ENCODE measurements at regions of chr4 and their contacts with region 1.

Region 1: GRCh38 chr4:119785963-119786362 is 157.4 kb upstream of the PDE5A start:
- DNase-seq: peak; percentile 37
- ATAC-seq: no peak

Region 2: DNA sequence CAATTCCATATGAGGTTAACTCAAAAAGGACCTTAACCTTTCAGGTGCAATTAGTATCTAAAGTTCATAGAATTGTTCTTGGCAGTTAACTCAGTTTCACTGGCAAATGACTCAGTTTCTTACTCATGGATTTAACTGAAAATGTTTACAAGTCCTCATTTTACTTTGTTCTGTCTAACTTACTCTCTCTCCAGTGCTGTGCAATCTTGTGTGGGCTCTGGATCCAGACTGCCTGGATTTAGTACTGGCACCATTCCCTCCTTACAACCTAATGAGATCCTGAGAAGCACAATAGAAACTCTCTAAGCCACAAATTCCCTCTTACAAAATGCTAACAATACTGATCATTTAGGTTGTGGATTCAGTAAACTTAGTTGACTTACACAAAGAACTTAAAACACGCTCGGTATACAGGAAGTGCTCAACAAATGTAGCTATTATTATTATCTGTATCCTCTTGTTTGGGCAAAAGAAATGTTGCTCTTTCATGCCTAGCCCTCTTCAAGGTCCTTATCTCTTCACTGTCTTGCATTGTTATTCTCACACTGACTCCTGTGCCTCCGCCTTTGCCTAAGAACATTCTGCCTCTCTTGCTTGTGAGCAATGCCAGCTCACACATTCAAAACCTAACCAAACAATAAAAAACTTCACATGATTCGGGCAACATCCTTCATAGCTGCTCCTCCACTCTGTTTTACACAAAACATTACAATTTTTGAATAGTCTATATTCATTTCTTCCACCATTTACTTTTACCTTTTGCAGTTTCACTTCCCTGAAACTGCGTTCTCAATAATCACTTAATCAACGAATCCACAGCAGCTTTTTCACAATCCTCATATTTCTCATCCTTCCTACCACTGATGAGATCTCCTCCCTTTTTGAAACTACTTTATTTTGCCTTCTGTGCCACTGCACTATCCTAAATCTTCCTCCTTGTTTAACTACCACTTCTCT is 249.1 kb before region 1 on chr4:
- intact Hi-C with region 1: no loop called
- DNase-seq: no peak
- ATAC-seq: no peak

Region 3: DNA sequence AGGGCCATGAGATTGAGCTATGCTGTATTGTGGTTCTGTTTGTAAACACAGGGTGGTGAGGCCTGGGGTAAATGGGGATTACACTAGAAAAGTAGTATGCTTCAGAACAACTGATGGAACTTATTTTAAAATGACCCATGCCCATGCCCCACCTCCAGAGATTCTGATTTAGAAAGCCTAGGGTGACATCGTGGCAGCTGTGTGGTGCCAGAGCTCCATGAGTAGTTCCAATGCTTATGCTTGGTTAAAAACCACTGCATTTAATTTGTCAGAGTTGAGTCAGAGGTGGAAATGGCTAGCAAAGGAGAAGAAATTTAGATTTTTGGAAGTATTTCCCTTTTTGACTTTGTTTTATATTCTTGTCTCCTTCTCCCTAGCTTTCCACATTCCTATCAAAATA is 94.0 kb before region 1 on chr4:
- intact Hi-C with region 1: loop called (anchors 10 kb)
- DNase-seq: peak; percentile 18
- ATAC-seq: peak; percentile 75

Region 4: DNA sequence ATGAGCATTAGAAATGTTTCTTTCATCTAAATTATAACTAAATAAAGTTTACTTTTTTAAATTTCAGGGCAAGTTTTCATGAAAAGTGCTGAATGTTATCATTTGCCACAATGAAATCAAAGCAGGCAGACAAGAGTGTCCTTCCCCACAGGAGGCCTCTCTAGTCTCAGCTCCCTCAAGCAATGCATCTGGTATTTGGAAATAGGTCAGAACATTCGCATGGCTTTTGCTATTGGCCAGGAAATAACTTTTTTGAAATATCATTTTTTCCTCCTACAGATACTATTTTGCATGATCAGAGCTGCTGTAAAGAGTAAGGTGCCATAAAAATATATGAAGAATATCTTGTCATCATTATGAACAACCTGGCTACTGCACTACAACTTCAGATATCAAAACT is 239.6 kb after region 1 on chr4:
- intact Hi-C with region 1: no loop called
- DNase-seq: no peak
- ATAC-seq: no peak

Measured in left ventricle myocardium superior (tissue), 1 donor.